Aorta (tissue), 5 donors: ENCODE measurements at regions of chr4 and their contacts with region 1.

Region 1: DNA sequence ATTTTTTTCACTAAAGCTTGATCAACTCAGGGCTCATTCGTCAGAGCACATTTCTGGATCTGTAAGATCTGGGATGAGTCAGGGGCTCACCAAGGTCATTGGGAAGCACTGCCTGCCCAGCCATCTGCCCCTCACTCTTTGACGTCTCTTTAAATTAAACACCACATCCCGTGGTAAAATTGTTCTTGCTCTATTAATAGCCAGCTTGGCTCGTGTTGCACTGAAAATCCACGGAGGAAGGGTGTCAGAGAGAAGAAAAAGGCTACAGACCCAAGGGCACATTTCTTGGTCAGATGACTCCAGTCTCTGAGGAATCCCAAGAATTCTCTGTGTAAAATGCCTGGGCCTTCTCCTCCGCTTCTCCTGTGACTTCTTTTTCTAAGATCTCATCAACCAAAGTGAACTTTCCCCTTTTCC is 45.7 kb upstream of the GATB start:
- DNase-seq: no peak
- ATAC-seq: peak; percentile 49
- H3K4me3 ChIP-seq: no peak overlapping the region
- H3K27ac ChIP-seq: peak overlapping the region in 1 of 2 donors; percentile 10
- H3K4me1 ChIP-seq: no peaks in the 10 kb centered on the region
- H3K27me3 ChIP-seq: no peaks in the 10 kb centered on the region

Region 2: DNA sequence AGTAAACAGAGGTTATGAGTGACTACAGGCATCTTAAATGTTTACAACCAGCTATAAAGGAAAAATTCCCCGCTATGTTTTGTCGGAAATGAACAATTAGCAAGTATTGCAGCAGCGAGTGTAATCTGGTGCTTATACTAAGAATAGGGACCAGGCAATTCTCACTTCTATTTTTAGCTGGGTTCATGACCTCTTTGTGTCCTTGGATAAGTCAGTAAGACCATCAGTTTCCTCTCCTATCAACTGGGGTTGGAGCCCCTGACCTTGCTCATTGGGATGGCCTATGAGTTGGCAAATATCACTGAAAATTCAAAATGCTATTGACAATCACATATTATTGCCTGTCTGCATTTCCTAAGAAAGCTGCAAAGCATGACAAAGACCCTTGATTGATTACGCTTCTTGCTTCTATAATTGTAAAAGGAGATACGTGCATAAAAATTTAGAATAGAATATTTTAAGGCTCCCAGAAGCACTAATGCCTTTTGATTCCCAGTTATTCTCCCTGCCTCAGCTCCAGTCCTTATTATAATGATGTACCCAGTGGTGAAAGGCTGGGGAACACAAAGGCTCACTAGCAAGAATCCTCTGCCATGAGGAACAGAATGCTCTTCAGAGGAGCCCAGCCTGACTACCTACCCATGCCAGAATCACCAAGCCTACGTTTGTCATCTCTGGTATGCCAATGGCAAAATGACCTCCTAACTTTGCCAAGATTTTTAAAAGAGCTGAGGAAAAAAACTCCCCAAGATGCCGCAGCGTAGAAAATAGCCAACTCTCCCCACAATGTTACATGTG is 67.6 kb before region 1 on chr4:
- intact Hi-C with region 1: no loop called
- DNase-seq: no peak
- ATAC-seq: no peak
- H3K4me3 ChIP-seq: no peak overlapping the region
- H3K27ac ChIP-seq: no peak overlapping the region
- H3K4me1 ChIP-seq: no peaks in the 10 kb centered on the region
- H3K27me3 ChIP-seq: no peaks in the 10 kb centered on the region

Region 3: GRCh38 chr4:152044331-152045036 is 238.0 kb after region 1 on chr4:
- intact Hi-C with region 1: loop called in 1 of 2 experiments (anchors 5 kb)
- DNase-seq: no peak
- ATAC-seq: no peak
- H3K4me3 ChIP-seq: no peak overlapping the region
- H3K27ac ChIP-seq: no peak overlapping the region
- H3K4me1 ChIP-seq: no peaks in the 10 kb centered on the region
- H3K27me3 ChIP-seq: no peaks in the 10 kb centered on the region

Region 4: DNA sequence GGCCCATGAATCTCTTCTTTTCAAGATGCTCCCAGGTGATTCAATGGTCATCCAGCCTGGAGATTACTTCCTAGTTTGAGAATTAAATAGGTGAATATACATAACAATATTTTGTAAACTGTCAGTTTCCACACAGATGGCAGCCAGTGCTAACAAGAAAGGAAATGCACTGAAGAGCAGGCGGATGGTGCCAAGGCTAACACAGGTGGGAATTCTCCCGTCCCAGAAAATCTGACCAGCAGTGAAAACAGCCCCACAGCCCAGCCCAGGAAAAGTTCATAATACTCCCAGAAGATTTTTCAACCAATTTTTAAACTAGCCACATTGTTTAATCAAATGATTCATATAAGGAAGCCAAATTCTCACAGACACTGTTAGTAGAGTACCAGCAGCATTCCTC is 341.5 kb after region 1 on chr4:
- intact Hi-C with region 1: no loop called
- DNase-seq: no peak
- ATAC-seq: no peak
- H3K4me3 ChIP-seq: no peak overlapping the region
- H3K27ac ChIP-seq: no peak overlapping the region
- H3K4me1 ChIP-seq: no peaks in the 10 kb centered on the region
- H3K27me3 ChIP-seq: no peaks in the 10 kb centered on the region